A673 (cell line): ENCODE measurements at regions of chr1 and their contacts with region 1.

Region 1: DNA sequence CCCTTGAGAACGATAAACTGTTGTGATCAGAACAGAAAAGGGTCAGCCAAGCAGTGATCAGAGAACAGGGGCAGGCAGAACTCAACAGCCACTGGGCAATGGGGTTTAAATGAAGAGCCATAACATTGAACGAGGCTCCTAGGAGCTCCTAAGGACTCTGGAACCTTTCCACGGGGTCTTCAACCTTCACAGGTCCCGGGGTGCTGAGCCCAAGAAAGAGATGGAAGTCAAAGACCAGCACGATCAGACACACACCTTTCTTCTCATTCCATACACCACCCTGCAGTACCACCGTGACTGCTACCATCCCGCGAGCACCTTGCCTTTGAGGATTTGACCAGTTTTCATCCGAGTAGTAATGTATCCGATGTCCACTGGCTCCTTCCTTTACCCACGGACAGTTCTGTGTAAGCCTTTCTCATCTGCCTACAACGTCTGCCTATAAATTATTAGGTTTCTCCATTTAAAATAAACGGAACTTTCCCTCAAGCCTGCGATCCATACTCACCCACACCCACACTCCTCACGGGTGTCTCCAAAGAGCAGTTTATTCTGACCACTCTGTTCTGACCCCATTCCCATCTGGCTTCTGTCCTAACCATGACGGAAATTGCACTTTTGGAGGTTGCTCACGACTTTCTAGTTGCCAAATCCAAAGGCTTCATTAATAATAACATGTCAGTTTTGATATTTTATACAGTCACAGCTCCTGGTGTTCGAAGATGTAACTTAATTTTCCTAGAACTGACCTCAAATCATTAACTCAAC is 16.8 kb upstream of the HHAT start:
- DNase-seq: no peak
- H3K4me3 ChIP-seq: peak overlapping the region; percentile 54
- H3K27ac ChIP-seq: no peak overlapping the region
- H3K4me1 ChIP-seq: peaks cover 14% of the 10 kb centered on the region
- H3K27me3 ChIP-seq: no peaks in the 10 kb centered on the region
- CTCF ChIP-seq: no peak

Region 2: GRCh38 chr1:209618756-209619420 is 693.0 kb before region 1 on chr1:
- CTCF ChIA-PET with region 1: no interaction called
- POLR2A ChIA-PET with region 1: no interaction called
- intact Hi-C with region 1: no loop called
- DNase-seq: peak; percentile 67
- H3K4me3 ChIP-seq: no peak overlapping the region
- H3K27ac ChIP-seq: peak overlapping the region; percentile 28
- H3K4me1 ChIP-seq: peaks cover 53% of the 10 kb centered on the region
- H3K27me3 ChIP-seq: no peaks in the 10 kb centered on the region
- CTCF ChIP-seq: no peak

Region 3: GRCh38 chr1:209850342-209850979 is 461.4 kb before region 1 on chr1:
- CTCF ChIA-PET with region 1: no interaction called
- POLR2A ChIA-PET with region 1: no interaction called
- intact Hi-C with region 1: loop called (anchors 1 kb)
- DNase-seq: peak; percentile 96
- H3K4me3 ChIP-seq: no peak overlapping the region
- H3K27ac ChIP-seq: peak overlapping the region; percentile 17
- H3K4me1 ChIP-seq: peaks cover 19% of the 10 kb centered on the region
- H3K27me3 ChIP-seq: no peaks in the 10 kb centered on the region
- CTCF ChIP-seq: peak; percentile 96

Region 4: DNA sequence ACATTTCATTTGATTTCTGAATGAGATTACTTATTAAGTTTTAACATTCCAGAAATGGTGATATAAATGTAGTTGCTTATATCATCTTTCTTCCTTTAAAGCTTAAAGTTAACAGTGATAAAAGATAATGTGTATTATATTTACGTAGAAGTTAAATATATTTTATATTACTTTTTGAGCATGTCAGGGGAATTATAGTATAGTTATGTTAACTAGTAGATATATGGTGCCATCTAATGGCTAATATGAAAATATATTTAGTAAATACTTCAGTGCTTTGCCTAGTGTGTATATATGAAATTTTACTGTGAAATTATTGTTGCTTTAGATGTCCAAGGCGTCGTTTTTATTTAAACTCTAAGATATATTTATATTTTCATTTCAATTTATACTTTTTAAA is 322.4 kb before region 1 on chr1:
- CTCF ChIA-PET with region 1: no interaction called
- POLR2A ChIA-PET with region 1: no interaction called
- intact Hi-C with region 1: loop called (anchors 2 kb)
- DNase-seq: peak; percentile 58
- H3K4me3 ChIP-seq: no peak overlapping the region
- H3K27ac ChIP-seq: peak overlapping the region; percentile 14
- H3K4me1 ChIP-seq: peaks cover 23% of the 10 kb centered on the region
- H3K27me3 ChIP-seq: no peaks in the 10 kb centered on the region
- CTCF ChIP-seq: peak; percentile 64

Region 5: GRCh38 chr1:210143465-210144062 is 168.3 kb before region 1 on chr1:
- CTCF ChIA-PET with region 1: interaction called, 3 read pairs
- POLR2A ChIA-PET with region 1: interaction called, 11 read pairs
- intact Hi-C with region 1: loop called (anchors 1 kb)
- DNase-seq: peak; percentile 85
- H3K4me3 ChIP-seq: no peak overlapping the region
- H3K27ac ChIP-seq: no peak overlapping the region
- H3K4me1 ChIP-seq: no peaks in the 10 kb centered on the region
- H3K27me3 ChIP-seq: no peaks in the 10 kb centered on the region
- CTCF ChIP-seq: peak; percentile 83

Region 6: GRCh38 chr1:210239349-210240111 is 72.4 kb before region 1 on chr1:
- CTCF ChIA-PET with region 1: no interaction called
- POLR2A ChIA-PET with region 1: no interaction called
- intact Hi-C with region 1: loop called (anchors 5 kb)
- DNase-seq: peak; percentile 61
- H3K4me3 ChIP-seq: no peak overlapping the region
- H3K27ac ChIP-seq: no peak overlapping the region
- H3K4me1 ChIP-seq: peaks cover 48% of the 10 kb centered on the region
- H3K27me3 ChIP-seq: peaks cover 3% of the 10 kb centered on the region
- CTCF ChIP-seq: peak; percentile 61

Region 7: GRCh38 chr1:210330279-210330866 is 18.5 kb after region 1 on chr1:
- CTCF ChIA-PET with region 1: interaction called, 12 read pairs
- POLR2A ChIA-PET with region 1: no interaction called
- intact Hi-C with region 1: no loop called
- DNase-seq: peak; percentile 23
- H3K4me3 ChIP-seq: no peak overlapping the region
- H3K27ac ChIP-seq: no peak overlapping the region
- H3K4me1 ChIP-seq: peaks cover 11% of the 10 kb centered on the region
- H3K27me3 ChIP-seq: no peaks in the 10 kb centered on the region
- CTCF ChIP-seq: no peak